Heart right ventricle (tissue), 16 donors: ENCODE measurements at regions of chr1 and their contacts with region 1.

Region 1: DNA sequence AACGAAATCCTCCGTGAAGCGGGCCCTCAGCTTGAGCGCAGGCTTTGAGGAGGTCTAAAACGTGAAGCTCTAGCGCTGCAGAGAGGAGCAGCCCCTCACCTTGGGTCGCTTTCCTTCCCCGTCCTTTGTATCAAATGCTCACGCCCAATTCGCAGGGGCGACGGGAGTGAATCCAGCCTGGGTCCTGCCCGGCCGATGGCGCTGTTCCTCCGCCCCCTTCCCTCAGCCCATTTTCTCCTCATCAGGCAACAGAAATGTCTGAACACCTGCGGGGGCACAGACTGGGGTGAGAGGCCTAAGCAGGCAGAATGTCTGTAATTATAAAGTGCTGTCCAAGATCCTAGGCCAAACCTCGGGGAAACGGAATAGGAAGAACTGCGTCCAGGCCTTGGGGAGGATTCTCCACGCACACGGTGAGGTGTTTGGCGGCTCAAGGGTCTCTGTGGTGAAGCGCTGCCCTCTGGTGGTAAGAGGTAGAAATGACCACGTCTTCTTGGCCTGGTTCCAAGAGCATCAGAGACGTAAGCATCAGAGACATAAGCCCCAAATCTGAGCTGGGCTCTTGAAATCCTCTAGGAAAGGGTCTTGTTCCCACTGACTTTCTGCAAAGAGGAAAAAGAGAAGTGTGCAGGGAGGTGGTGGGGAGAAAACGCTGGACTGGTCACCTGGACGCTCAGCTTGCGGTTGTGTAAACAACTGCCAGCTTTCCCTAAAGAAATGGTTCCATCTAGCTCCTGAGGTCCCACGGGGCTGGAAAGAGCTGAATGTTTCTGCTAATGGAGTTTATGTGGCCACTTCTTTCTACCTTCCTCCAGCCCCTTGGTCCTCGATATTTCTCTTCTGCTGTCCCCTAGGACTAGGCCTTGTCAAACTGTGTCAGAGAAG is 92.1 kb upstream of the CD53 start:
- DNase-seq: peak; percentile 38 to 54
- ATAC-seq: peak; percentile 43 to 72 (median 60)
- H3K4me3 ChIP-seq: no peak overlapping the region
- H3K27ac ChIP-seq: no peak overlapping the region
- H3K4me1 ChIP-seq: peaks cover 0 to 35% (median 3%) of the 10 kb centered on the region in 9 donors
- H3K27me3 ChIP-seq: peaks cover 0 to 31% (median 11%) of the 10 kb centered on the region in 7 donors
- CTCF ChIP-seq: peak; percentile 72 to 93 (median 88)

Region 2: GRCh38 chr1:110619412-110620249 is 161.2 kb before region 1 on chr1:
- intact Hi-C with region 1: loop called in 7 of 10 experiments (anchors 2 to 5 kb)
- DNase-seq: peak; percentile 83
- ATAC-seq: peak; percentile 76 to 95 (median 91)
- H3K4me3 ChIP-seq: peak overlapping the region in 3 of 10 donors; percentile 1 to 46 (median 15)
- H3K27ac ChIP-seq: peak overlapping the region in 1 of 10 donors; percentile 52
- H3K4me1 ChIP-seq: peaks cover 0 to 11% (median 9%) of the 10 kb centered on the region in 9 donors
- H3K27me3 ChIP-seq: peaks cover 3 to 51% (median 41%) of the 10 kb centered on the region in 7 donors
- CTCF ChIP-seq: peak; percentile 90 to 97 (median 95)

Region 3: DNA sequence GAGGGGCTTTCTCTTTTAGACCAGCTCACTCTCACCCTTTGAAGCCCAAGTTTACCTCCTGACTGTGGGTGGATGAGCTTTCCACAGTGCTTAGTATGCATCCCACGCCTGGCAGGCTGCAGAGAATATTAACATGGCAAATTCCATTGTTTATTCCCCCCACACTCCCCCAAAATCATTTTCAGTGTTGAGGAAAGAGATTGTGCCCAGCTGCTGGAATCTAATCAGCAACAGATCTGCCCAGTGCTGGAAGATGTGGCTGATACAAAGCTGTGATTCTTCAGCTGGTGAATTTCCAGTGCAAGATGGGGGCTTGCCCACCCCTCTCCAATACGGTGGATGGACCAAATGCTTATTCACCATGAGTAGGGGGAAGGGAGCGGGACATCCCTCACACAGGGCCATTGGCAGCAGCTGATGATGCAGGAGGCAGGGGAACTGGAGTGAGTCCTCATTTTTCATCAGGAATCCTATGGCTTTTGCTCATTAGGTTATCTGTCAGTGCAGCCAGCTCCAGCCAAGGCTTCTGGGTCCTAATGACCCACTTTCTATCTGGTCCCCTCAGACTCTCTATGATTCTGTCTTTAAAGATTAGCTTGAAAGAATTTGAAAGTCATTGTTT is 66.4 kb before region 1 on chr1:
- intact Hi-C with region 1: no loop called
- DNase-seq: no peak
- ATAC-seq: no peak
- H3K4me3 ChIP-seq: no peak overlapping the region
- H3K27ac ChIP-seq: no peak overlapping the region
- H3K4me1 ChIP-seq: peaks cover 0 to 14% (median 0%) of the 10 kb centered on the region in 9 donors
- H3K27me3 ChIP-seq: no peaks in the 10 kb centered on the region
- CTCF ChIP-seq: no peak

Region 4: GRCh38 chr1:110879758-110880606 is 99.1 kb after region 1 on chr1:
- intact Hi-C with region 1: no loop called
- DNase-seq: no peak
- ATAC-seq: peak in 3 of 8 donors; percentile 4 to 62 (median 37)
- H3K4me3 ChIP-seq: peak overlapping the region in 1 of 10 donors; percentile 1
- H3K27ac ChIP-seq: peak overlapping the region in 1 of 10 donors; percentile 95
- H3K4me1 ChIP-seq: peaks cover 0 to 87% (median 0%) of the 10 kb centered on the region in 9 donors
- H3K27me3 ChIP-seq: peaks cover 0 to 6% (median 0%) of the 10 kb centered on the region in 7 donors
- CTCF ChIP-seq: no peak